ENCODE measurements at regions of chr13 and their contacts with region 1.

Region 1: DNA sequence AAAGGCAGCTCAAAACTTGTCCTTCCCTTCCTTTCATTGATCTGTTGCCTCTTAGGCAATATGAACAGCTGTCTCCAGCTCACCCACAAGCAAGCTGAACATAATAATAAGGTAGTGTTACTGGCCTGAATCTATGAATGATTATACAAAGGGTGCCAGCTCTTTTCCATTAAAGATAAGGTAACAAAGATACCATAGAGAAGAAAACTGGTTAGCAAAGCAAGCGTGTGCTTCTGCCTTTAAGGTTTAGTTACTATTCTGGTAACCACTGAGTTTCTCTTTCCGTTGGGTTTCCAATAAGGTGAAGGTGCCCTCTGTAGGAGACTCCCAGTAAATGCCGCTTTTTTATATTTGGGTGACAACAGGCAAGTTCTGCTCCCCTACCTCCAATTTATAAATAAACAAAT is 12.1 kb upstream of the DACH1 start:
- DNase-seq: peak in 1 of 5 donors; percentile 12
- ATAC-seq: peak; percentile 71 to 78 (median 72)
- H3K4me3 ChIP-seq: peak overlapping the region in 3 of 12 donors; percentile 10 to 21 (median 20)
- H3K27ac ChIP-seq: peak overlapping the region in 1 of 12 donors; percentile 19
- H3K4me1 ChIP-seq: peaks cover 0 to 9% (median 0%) of the 10 kb centered on the region in 12 donors
- H3K27me3 ChIP-seq: no peaks in the 10 kb centered on the region
- CTCF ChIP-seq: peak; percentile 40 to 76 (median 64)
- POLR2A ChIP-seq: no peak

Region 2: DNA sequence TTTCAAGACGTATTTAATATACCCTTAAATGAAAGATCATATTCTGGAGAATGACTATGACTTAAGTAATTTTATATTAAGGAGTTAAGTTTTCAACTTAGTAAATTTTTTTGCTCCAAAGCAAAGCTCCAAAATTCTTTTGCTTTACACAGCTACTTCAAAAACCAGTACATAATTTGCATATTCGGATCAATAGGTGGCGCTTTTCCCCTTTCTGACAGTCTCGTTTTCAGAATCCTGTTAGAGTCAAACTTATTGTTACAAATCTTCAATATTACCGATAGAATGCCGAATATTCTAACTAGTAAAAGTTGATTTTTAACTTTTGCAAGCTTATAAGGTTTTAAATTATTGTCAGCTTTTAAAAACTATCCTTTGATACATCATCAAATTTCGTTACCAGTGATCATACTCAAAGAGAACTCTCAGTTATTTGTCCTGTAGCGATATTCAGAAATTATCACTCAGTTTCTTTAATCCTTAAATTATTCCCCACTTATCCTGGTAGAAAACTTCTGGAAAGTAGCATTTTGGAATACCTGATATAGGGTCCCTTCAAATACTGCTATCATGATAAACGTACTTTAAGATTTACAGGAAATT is 918.2 kb before region 1 on chr13:
- intact Hi-C with region 1: loop called in 6 of 10 experiments (anchors 5 to 10 kb)
- DNase-seq: no peak
- ATAC-seq: no peak
- H3K4me3 ChIP-seq: no peak overlapping the region
- H3K27ac ChIP-seq: no peak overlapping the region
- H3K4me1 ChIP-seq: no peaks in the 10 kb centered on the region
- H3K27me3 ChIP-seq: no peaks in the 10 kb centered on the region
- CTCF ChIP-seq: peak; percentile 31 to 72 (median 54)
- POLR2A ChIP-seq: no peak

Region 3: DNA sequence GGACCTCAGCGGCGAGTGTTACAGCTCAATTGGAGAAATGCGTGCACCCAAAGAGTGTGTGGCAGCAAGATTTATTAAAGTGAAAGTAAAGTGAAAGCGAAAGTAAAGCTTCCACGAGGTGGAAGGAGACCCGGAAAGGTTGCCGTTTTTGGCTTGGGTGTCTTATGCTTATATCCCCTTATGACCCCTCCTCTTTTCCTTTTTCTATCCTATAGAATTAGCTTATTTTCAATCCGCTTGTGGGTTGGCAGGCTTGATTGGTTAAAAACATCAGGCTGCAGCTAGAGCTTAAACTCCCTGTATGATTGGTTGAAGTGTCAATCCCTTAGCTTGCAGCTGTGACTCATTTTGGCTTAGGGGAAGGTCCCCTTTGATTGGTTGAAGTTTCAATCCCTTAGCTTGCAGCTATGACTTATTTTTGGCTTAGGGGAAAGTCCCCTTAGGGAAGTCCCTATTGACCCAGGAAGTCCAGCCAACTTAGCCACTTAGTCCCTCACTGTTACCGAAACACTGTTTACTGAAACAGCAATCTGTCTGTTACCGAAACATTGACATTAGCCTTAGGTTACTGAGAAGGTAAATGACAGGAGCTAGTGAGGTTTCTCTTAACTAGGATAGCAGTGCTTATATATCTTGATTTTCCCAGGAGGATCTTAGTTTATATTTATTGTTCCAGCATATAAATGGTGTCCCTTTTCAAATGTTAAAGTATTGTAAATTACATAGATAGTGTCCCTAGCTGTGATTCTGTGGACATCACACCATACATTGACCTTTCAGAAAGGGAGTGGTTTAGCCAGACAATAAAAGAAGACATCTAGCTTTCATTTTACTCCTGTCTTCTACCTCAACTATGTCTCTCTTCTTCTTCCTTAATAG is 587.9 kb before region 1 on chr13:
- intact Hi-C with region 1: loop called in 3 of 10 experiments (anchors 5 to 10 kb)
- DNase-seq: peak in 4 of 5 donors; percentile 28 to 52 (median 34)
- ATAC-seq: peak in 2 of 4 donors; percentile 49 to 62
- H3K4me3 ChIP-seq: peak overlapping the region in 11 of 12 donors; percentile 29 to 65 (median 46)
- H3K27ac ChIP-seq: peak overlapping the region in 11 of 12 donors; percentile 4 to 75 (median 57)
- H3K4me1 ChIP-seq: peaks cover 0 to 10% (median 0%) of the 10 kb centered on the region in 12 donors
- H3K27me3 ChIP-seq: no peaks in the 10 kb centered on the region
- CTCF ChIP-seq: no peak
- POLR2A ChIP-seq: no peak

Region 4: DNA sequence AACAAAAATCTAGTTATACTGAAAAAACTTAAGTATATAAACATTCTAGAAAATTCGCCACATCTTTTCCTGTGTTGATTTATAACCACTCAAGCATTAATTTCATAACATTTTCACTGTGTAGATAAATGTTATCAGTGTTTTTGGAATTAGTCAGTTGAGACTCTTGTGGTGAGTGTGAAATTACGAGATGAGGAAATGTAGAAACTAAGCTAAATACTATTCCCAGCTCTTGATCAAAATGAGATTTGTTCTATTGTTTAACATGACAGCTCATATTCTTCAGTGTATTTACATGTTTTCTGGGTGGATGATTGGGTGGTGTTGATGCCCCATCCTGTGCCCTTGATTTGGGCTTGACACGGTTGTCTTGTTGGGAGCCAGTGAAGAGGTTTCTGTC is 418.9 kb before region 1 on chr13:
- intact Hi-C with region 1: loop called in 1 of 10 experiments (anchors 10 kb)
- DNase-seq: no peak
- ATAC-seq: no peak
- H3K4me3 ChIP-seq: no peak overlapping the region
- H3K27ac ChIP-seq: no peak overlapping the region
- H3K4me1 ChIP-seq: peaks cover 0 to 11% (median 0%) of the 10 kb centered on the region in 12 donors
- H3K27me3 ChIP-seq: no peaks in the 10 kb centered on the region
- CTCF ChIP-seq: no peak
- POLR2A ChIP-seq: no peak